Common myeloid progenitor, CD34-positive (primary cell): ENCODE measurements at regions of chr2 and their contacts with region 1.

Region 1: GRCh38 chr2:105377819-105378218 is 21.0 kb downstream of the FHL2 start:
- DNase-seq: no peak
- H3K4me3 ChIP-seq: no peak overlapping the region
- H3K27ac ChIP-seq: no peak overlapping the region
- H3K4me1 ChIP-seq: peaks cover 5 to 48% (median 19%) of the 10 kb centered on the region in 4 experiments
- H3K27me3 ChIP-seq: no peaks in the 10 kb centered on the region

Region 2: DNA sequence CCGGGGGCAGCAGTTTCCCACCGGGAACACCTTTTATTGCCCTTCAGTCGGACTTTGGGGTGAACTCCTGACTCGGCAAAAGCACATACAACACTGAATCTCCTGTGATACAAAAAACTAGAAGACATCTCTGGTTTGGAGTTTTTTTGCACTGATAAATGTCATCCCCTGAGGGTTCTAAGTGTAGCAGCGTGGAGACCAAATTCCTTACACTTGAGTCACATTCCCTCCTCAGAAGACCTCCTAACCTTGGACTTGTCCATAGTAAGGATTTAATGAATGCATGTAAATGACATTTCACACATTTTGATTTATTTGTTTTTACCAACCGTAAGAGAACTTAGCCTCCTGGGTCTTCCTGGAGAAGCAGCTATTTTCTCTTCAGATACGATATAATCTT is 190.3 kb before region 1 on chr2:
- CTCF ChIA-PET with region 1: no interaction called
- POLR2A ChIA-PET with region 1: no interaction called
- DNase-seq: no peak
- H3K4me3 ChIP-seq: no peak overlapping the region
- H3K27ac ChIP-seq: no peak overlapping the region
- H3K4me1 ChIP-seq: no peaks in the 10 kb centered on the region
- H3K27me3 ChIP-seq: no peaks in the 10 kb centered on the region

Region 3: DNA sequence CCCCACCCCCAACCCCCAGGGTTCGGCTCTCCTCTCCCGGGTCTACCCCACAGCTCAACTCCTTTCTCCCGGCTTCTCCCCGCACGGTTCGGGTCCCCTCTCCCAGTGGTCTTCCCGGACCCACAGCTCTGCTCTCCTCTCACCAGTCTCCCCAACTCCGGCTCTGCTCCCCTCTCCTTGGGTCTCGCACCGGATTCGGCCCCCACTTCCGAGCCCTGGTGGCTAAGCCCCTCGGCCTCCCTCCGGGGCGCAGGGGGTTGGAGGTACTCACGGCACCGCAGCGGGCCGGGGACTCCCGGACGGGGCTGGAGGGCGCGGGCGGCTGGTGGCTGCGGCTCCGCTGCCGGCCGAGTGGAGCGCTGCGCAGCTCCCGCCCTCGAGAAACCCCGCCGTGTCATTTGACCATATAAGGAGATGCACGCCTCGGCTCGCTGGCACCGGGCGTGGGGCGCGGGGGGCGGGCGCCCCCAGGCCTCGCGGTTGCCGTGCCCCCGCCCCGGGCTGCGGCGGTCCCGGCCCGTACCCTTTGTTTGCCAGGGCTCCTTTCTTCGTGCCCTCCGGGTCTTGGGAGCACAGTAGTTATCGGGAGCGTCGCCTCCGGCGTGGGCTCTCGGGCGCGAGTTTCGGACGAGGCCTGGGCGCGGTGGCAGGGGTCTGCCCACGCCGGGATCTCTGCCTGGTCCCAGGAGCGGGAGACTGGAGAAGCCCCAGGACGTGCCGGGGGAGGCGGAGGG is 21.0 kb after region 1 on chr2 and contains the start of gene FHL2:
- CTCF ChIA-PET with region 1: interaction called, 22 read pairs
- POLR2A ChIA-PET with region 1: no interaction called
- DNase-seq: peak; percentile 79 to 92 (median 89)
- H3K4me3 ChIP-seq: peak within 1 kb of the TSS; percentile 61 to 87 (median 78)
- H3K27ac ChIP-seq: peak within 1 kb of the TSS in 1 of 2 experiments; percentile 75
- H3K4me1 ChIP-seq: peaks cover 0 to 16% (median 11%) of the 10 kb centered on the region in 4 experiments
- H3K27me3 ChIP-seq: peaks cover 0 to 3% (median 0%) of the 10 kb centered on the region in 5 experiments